PC-9 (cell line): ENCODE measurements at regions of chr17 and their contacts with region 1.

Region 1: GRCh38 chr17:78313735-78314648 is 45.9 kb downstream of the SOCS3 start:
- DNase-seq: peak; percentile 75 to 98
- H3K4me3 ChIP-seq: peak overlapping the region; percentile 51; the same call in 1 of the 2 replicates
- H3K27ac ChIP-seq: peak overlapping the region; percentile 95
- H3K4me1 ChIP-seq: peaks cover 41% of the 10 kb centered on the region
- H3K27me3 ChIP-seq: no peaks in the 10 kb centered on the region
- CTCF ChIP-seq: no peak

Region 2: DNA sequence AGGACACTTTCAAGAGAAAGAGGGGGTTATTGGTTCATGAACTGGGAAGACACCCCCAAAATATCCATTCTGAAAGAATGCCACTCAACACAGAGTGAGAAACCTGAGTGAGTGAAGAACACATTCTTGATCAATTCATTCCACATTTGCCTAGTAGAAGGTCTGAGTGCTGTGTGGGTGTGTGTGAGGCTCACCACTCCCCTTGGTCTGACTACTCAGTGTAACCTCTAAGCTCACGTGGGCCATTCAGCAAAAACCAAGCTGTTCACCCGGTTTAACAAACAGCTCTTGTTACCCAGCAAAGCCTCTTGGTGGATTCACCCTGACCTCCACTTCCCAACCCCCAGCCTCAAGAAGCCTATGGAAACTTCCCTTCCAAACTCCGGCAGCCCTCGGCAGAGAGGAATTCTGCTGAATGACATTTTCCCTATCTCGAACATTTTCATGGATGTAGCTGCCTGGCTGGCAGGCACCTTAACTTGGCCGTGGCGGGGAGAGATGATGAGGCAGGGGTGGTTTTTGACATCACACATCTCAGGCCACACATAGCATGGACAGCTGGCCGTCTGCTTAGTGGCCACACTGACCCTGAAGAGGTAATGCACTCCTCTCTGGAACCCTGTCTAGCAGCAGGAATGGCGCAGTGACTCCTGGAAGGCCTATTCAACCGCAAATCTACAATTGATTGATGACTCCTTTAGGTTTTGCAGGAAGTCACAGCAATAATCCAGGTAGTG is 1682.0 kb before region 1 on chr17:
- CTCF ChIA-PET with region 1: interaction called, 17 read pairs
- POLR2A ChIA-PET with region 1: no interaction called
- intact Hi-C with region 1: no loop called
- DNase-seq: peak; percentile 52 to 60
- H3K4me3 ChIP-seq: no peak overlapping the region
- H3K27ac ChIP-seq: no peak overlapping the region
- H3K4me1 ChIP-seq: no peaks in the 10 kb centered on the region
- H3K27me3 ChIP-seq: no peaks in the 10 kb centered on the region
- CTCF ChIP-seq: no peak

Region 3: DNA sequence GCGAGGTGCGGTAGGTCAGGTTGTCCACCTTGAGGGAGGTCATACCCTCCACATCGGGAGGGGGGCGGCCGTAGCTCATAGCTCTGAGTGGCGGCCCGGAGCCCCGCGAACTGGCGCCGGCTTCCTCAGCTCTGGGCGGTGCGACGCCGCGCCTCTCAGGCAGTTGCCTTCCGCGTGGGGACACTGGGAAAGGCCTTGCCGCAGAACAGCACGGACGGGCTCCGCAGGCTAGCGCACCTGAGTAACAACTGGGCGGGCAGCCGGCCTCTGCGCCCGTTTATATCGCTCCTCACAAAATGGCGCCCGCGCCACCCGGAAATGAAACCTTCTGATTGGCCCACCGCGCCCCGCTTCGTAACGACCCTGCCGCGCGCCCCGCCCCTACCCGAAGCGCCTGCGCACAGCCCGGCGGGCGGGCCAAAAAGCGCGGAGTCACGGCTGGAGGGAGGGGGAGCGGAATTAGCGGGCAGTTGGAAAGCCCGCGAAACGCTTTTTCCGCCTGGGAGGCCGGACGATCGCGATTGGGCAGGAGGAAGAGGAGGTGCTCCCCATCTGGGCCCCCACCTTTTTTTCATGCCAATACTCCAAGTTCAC is 1576.8 kb before region 1 on chr17 and contains the start of gene SRSF2:
- CTCF ChIA-PET with region 1: no interaction called
- POLR2A ChIA-PET with region 1: no interaction called
- intact Hi-C with region 1: loop called (anchors 10 kb)
- DNase-seq: peak; percentile 89 to 99
- H3K4me3 ChIP-seq: peak within 1 kb of the TSS; percentile 92
- H3K27ac ChIP-seq: peak within 1 kb of the TSS; percentile 90
- H3K4me1 ChIP-seq: peaks cover 28% of the 10 kb centered on the region
- H3K27me3 ChIP-seq: no peaks in the 10 kb centered on the region
- CTCF ChIP-seq: no peak
- total RNA-seq, gene SRSF2: 186 and 187 TPM in 2 replicates

Region 4: DNA sequence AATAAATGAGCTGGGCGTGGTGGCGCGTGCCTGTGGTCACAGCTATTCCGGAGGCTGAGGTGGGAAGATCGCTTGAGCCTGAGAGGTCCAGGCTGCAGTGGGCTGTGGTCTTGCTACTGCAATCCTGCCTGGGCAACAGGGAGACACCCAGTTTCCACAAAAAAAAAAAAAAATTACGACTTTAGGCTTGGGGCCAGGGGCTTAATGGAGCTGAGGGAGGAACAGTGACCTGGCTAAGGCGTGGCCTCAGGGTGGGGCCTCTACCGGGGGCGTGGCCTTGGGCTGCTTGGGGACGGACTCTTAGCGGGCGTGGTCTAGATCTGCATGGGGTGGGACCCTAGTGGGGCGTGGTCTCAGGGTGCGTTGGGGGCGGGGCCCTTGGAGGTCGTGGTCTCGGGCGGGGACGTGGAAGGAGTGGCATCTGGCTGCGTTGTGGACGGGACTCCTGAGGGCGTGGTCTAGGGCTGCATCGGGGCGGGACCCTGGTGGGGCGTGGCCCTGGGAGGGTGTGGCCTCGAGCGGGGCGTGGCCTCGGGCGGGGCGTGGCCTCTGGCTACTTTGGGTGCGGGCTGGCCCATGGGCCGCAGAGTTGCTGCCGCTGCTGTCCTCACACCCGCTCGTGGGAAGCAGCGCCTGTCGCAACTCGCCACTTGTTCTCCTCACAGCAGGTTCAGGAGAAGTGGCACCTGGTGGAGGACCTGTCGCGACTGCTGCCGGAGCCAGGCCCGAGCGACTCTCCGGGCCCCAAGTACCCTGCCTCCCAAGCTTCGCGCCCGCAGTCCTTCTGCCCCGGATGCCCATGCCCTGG is 173.6 kb before region 1 on chr17:
- CTCF ChIA-PET with region 1: no interaction called
- POLR2A ChIA-PET with region 1: no interaction called
- intact Hi-C with region 1: no loop called
- DNase-seq: peak; percentile 84 to 99
- H3K4me3 ChIP-seq: peak overlapping the region; percentile 51; the same call in 1 of the 2 replicates
- H3K27ac ChIP-seq: peak overlapping the region; percentile 34; the same call in 1 of the 2 replicates
- H3K4me1 ChIP-seq: peaks cover 43% of the 10 kb centered on the region
- H3K27me3 ChIP-seq: no peaks in the 10 kb centered on the region
- CTCF ChIP-seq: no peak

Region 5: DNA sequence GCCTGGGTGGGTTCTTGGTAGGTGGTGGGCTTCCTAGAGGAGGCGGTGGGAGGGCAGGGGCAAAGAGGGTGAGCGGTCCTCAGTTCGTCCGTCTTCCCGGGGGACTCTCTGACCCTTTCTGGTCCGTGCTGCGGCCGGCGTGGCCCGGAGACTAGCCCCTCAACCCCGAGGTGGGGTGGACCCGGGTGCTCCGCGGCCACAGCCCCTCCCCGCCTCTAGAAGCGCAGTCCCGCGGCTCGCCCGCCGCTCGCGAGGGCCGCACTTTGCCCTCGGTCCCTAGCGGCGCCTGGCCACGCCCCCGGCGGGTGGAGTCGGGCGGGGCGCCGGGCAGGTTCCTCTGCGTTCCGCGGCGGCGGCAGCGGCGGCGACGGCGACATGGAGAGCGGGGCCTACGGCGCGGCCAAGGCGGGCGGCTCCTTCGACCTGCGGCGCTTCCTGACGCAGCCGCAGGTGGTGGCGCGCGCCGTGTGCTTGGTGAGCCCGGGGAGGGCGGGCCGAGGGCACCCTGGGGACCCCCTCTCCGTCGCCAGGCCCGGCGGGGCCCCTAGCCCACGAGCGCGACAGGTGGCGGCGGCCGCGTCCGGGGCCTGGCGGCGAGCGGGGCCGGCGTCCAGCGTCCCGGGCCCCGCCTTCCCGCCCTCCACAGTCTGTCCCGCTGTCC is 145.6 kb before region 1 on chr17 and contains the start of gene SYNGR2:
- CTCF ChIA-PET with region 1: no interaction called
- POLR2A ChIA-PET with region 1: interaction called, 13 read pairs
- intact Hi-C with region 1: no loop called
- DNase-seq: peak; percentile 55 to 89
- H3K4me3 ChIP-seq: peak within 1 kb of the TSS; percentile 67
- H3K27ac ChIP-seq: no peak within 1 kb of the TSS
- H3K4me1 ChIP-seq: peaks cover 10% of the 10 kb centered on the region; the same call in 1 of the 2 replicates
- H3K27me3 ChIP-seq: no peaks in the 10 kb centered on the region
- CTCF ChIP-seq: no peak
- total RNA-seq, gene SYNGR2: 91.9 and 95.0 TPM in 2 replicates

Region 6: GRCh38 chr17:78289802-78290363 is 24.1 kb before region 1 on chr17:
- CTCF ChIA-PET with region 1: interaction called, 11 read pairs
- POLR2A ChIA-PET with region 1: interaction called, 3 read pairs
- intact Hi-C with region 1: no loop called
- DNase-seq: peak; percentile 59 to 68
- H3K4me3 ChIP-seq: no peak overlapping the region
- H3K27ac ChIP-seq: no peak overlapping the region
- H3K4me1 ChIP-seq: peaks cover 9% of the 10 kb centered on the region
- H3K27me3 ChIP-seq: no peaks in the 10 kb centered on the region
- CTCF ChIP-seq: peak; percentile 79

Region 7: DNA sequence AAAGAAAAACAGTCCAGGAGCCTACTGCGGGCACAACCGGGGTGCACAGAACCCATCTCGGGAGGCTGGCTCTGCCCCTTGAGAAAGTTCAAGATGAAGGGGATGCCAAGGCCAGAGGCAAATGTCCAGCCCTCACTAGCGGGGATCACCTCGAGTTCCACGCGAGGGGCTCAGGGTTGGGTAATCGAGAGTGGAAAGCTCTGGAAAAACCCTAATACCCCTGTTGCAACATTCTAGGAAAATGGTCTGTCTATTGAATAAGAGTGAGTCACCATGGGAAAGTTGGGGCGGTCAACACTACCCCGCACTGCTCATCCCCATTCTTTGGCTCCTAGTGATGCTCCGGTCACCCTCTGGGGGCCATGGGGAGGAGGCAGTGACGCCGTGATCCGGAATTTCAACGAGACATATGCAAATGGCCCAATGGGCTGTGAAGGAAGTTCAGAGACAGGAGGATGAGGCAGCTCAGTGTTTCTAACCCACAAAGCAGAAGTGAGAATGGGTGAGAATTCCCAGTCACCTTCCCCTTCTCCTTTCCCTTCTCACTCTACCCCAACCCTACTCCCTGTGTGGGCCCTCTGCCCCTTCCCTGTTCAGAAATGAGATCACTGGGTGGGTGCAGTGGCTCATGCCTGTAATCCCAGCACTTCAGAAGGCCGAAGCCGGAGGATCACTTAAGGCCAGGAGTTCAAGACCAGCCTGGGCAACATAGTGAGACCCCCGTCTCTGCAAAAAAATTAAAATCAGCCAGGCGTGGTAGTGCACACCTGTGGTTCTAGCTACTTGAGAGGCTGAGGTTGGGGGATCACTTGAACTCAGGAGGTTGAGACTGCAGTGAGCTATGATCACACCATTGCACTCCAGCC is 23.5 kb after region 1 on chr17:
- CTCF ChIA-PET with region 1: interaction called, 15 read pairs
- POLR2A ChIA-PET with region 1: interaction called, 5 read pairs
- intact Hi-C with region 1: loop called (anchors 1 kb)
- DNase-seq: peak; percentile 52 to 71
- H3K4me3 ChIP-seq: no peak overlapping the region
- H3K27ac ChIP-seq: peak overlapping the region; percentile 100
- H3K4me1 ChIP-seq: peaks cover 91% of the 10 kb centered on the region
- H3K27me3 ChIP-seq: no peaks in the 10 kb centered on the region
- CTCF ChIP-seq: no peak